Activated CD4-positive, alpha-beta memory T cell treated with anti-CD3 and anti-CD28 coated beads for 36 hours (primary cell): ENCODE measurements at regions of chr1 and their contacts with region 1.

Region 1: GRCh38 chr1:167542109-167543032 is 11.2 kb downstream of the CREG1 start:
- DNase-seq: peak; percentile 33
- H3K4me3 Mint-ChIP-seq: no peak overlapping the region
- H3K27ac Mint-ChIP-seq: peak overlapping the region; percentile 18
- H3K4me1 Mint-ChIP-seq: peaks cover 46% of the 10 kb centered on the region
- H3K27me3 Mint-ChIP-seq: no peaks in the 10 kb centered on the region

Region 2: DNA sequence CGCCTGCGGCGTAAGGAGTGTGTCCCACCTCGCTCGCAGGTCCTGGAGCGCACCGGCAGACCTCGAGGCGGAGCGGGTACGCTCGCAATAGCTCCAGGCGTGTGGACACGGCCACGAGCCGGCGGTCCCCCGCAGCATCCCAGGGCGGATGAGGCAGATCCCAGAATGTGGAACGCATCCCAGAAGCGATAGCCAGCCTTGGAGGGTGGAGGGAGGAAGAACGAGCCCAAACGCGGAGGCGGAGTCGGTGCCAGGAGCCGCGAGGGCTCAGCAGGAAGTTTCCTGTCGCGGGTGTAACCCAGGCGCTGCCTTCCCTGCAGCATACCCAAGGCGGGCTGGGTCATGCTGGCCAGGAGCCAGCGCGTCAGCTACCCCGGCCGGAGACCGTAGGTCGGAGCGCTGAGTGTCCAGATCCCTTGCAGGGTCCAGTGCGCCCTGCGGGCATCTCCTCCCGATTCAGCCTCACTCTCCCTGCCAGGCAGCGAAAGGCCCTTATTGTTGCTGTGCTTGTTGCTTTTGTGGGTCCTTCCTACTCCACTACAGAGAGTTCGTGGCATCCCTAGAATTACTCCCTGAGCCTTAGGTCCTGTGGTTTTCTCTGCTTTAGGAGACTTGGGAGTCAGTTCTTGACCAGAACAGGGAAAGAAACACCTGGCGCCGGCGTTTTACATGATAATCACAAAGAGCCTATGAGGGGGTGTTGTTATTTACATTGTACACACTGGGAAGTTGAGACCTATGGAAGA is 420.8 kb before region 1 on chr1:
- CTCF ChIA-PET with region 1: no interaction called
- POLR2A ChIA-PET with region 1: no interaction called
- intact Hi-C with region 1: loop called (anchors 5 kb)
- DNase-seq: peak; percentile 51
- H3K4me3 Mint-ChIP-seq: peak overlapping the region; percentile 74
- H3K27ac Mint-ChIP-seq: no peak overlapping the region
- H3K4me1 Mint-ChIP-seq: peaks cover 5% of the 10 kb centered on the region
- H3K27me3 Mint-ChIP-seq: no peaks in the 10 kb centered on the region

Region 3: DNA sequence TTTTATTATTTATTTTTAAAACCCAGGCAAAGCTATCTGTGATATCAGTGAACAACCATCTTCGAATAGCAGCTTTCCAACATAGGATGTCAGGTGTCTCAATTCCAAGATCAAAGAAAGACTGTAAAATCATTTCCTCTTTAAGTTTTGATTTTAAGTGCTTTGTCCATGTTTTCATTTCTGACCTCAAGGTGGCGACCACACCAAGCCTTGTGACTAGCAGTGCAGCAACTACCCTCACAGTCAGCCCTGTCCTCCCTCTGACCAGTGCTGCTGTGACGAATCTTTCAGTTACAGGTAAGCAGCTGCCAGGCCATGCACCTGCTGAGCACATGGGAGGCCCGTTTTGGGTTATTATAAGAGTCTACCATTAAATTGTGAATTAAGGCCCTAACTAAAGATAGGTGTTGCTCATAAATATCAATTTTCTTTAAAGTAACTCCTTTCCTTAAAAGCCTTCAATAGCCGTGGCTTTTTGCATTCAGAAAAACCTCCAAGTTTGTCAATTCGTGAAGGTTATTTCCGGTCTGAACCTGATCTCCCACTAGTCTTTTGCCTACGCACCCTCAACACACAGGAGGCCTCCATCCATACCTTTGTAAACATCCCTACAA is 141.0 kb before region 1 on chr1:
- CTCF ChIA-PET with region 1: interaction called, 26 read pairs
- POLR2A ChIA-PET with region 1: no interaction called
- intact Hi-C with region 1: loop called (anchors 1 kb)
- DNase-seq: peak; percentile 64
- H3K4me3 Mint-ChIP-seq: no peak overlapping the region
- H3K27ac Mint-ChIP-seq: no peak overlapping the region
- H3K4me1 Mint-ChIP-seq: no peaks in the 10 kb centered on the region
- H3K27me3 Mint-ChIP-seq: no peaks in the 10 kb centered on the region

Region 4: GRCh38 chr1:167563579-167564246 is 21.3 kb after region 1 on chr1:
- CTCF ChIA-PET with region 1: interaction called, 11 read pairs
- POLR2A ChIA-PET with region 1: no interaction called
- intact Hi-C with region 1: no loop called
- DNase-seq: no peak
- H3K4me3 Mint-ChIP-seq: no peak overlapping the region
- H3K27ac Mint-ChIP-seq: no peak overlapping the region
- H3K4me1 Mint-ChIP-seq: no peaks in the 10 kb centered on the region
- H3K27me3 Mint-ChIP-seq: no peaks in the 10 kb centered on the region

Region 5: GRCh38 chr1:167584581-167584980 is 42.2 kb after region 1 on chr1:
- CTCF ChIA-PET with region 1: no interaction called
- POLR2A ChIA-PET with region 1: no interaction called
- intact Hi-C with region 1: no loop called
- DNase-seq: no peak
- H3K4me3 Mint-ChIP-seq: no peak overlapping the region
- H3K27ac Mint-ChIP-seq: no peak overlapping the region
- H3K4me1 Mint-ChIP-seq: no peaks in the 10 kb centered on the region
- H3K27me3 Mint-ChIP-seq: no peaks in the 10 kb centered on the region

Region 6: GRCh38 chr1:167612587-167613385 is 70.4 kb after region 1 on chr1:
- CTCF ChIA-PET with region 1: no interaction called
- POLR2A ChIA-PET with region 1: no interaction called
- intact Hi-C with region 1: no loop called
- DNase-seq: no peak
- H3K4me3 Mint-ChIP-seq: no peak overlapping the region
- H3K27ac Mint-ChIP-seq: no peak overlapping the region
- H3K4me1 Mint-ChIP-seq: peaks cover 22% of the 10 kb centered on the region
- H3K27me3 Mint-ChIP-seq: no peaks in the 10 kb centered on the region

Region 7: GRCh38 chr1:167661527-167662426 is 119.4 kb after region 1 on chr1:
- CTCF ChIA-PET with region 1: no interaction called
- POLR2A ChIA-PET with region 1: no interaction called
- intact Hi-C with region 1: no loop called
- DNase-seq: no peak
- H3K4me3 Mint-ChIP-seq: no peak overlapping the region
- H3K27ac Mint-ChIP-seq: no peak overlapping the region
- H3K4me1 Mint-ChIP-seq: peaks cover 78% of the 10 kb centered on the region
- H3K27me3 Mint-ChIP-seq: no peaks in the 10 kb centered on the region